CD4-positive, alpha-beta T cell (primary cell): ENCODE measurements at regions of chr19 and their contacts with region 1.

Region 1: DNA sequence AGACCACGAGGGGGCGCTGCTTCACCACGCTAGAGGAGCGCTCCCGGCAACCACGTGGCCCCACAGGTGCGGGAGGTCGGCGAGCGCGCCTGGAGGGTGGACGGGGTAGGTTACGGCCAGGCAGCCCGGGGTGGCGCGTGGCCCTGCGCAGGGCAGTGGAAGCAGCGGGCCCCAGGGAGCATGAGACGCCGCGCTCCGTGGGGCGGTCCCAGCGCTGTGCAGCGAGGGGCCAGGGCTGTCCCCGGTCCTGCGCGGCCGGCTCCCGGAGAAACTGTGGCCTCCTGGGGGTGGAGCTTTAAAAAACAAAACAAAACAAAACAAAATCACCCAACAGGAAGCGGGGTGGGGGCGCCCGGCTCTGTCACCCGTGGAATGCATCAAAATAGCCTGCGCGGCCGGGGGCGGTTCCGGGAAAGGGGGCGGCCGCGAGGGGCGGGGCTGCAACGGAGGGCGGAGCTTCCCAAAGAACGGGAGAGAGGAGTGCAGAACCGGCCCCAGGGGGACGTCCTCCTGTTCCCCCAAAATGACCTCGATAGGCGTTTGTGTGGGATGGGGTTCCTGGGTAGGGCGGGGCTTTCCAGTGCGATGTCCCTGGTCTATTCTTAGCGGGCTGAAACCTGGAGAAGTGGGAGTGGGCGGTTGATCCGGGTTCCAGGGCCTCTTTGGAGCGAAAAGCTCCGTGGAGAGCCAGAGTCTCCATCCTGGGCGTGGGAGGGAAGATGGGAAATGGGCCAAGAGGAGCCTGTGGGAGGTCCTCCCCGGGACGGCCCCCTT is 27.3 kb downstream of the NUMBL start:
- DNase-seq: peak; percentile 85 to 98 (median 94)
- ATAC-seq: peak; percentile 89
- H3K4me3 ChIP-seq: peak overlapping the region; percentile 56
- H3K4me3 Mint-ChIP-seq: peak overlapping the region; percentile 91
- H3K27ac ChIP-seq: peak overlapping the region; percentile 35 to 53
- H3K27ac Mint-ChIP-seq: peak overlapping the region; percentile 74
- H3K4me1 ChIP-seq: peaks cover 15% of the 10 kb centered on the region
- H3K4me1 Mint-ChIP-seq: peaks cover 19% of the 10 kb centered on the region
- H3K27me3 ChIP-seq: no peaks in the 10 kb centered on the region
- H3K27me3 Mint-ChIP-seq: no peaks in the 10 kb centered on the region
- CTCF ChIP-seq: peak; percentile 90

Region 2: GRCh38 chr19:39125554-39126311 is 1537.4 kb before region 1 on chr19 and contains the start of gene PAK4:
- CTCF ChIA-PET with region 1: no interaction called
- POLR2A ChIA-PET with region 1: no interaction called
- intact Hi-C with region 1: no loop called
- DNase-seq: peak; percentile 89 to 98 (median 95)
- ATAC-seq: peak; percentile 91
- H3K4me3 ChIP-seq: peak within 1 kb of the TSS; percentile 58
- H3K4me3 Mint-ChIP-seq: peak within 1 kb of the TSS; percentile 93
- H3K27ac ChIP-seq: peak within 1 kb of the TSS; percentile 69 to 88
- H3K27ac Mint-ChIP-seq: peak within 1 kb of the TSS; percentile 92
- H3K4me1 ChIP-seq: peaks cover 30% of the 10 kb centered on the region
- H3K4me1 Mint-ChIP-seq: peaks cover 55% of the 10 kb centered on the region
- H3K27me3 ChIP-seq: no peaks in the 10 kb centered on the region
- H3K27me3 Mint-ChIP-seq: peaks cover 5% of the 10 kb centered on the region
- CTCF ChIP-seq: no peak
- total RNA-seq, gene PAK4: 2.7 to 6.3 TPM

Region 3: GRCh38 chr19:40633207-40633606 is 29.9 kb before region 1 on chr19:
- CTCF ChIA-PET with region 1: interaction called, 10 read pairs
- POLR2A ChIA-PET with region 1: no interaction called
- intact Hi-C with region 1: no loop called
- DNase-seq: no peak
- ATAC-seq: no peak
- H3K4me3 ChIP-seq: no peak overlapping the region
- H3K4me3 Mint-ChIP-seq: no peak overlapping the region
- H3K27ac ChIP-seq: no peak overlapping the region
- H3K27ac Mint-ChIP-seq: no peak overlapping the region
- H3K4me1 ChIP-seq: peaks cover 9% of the 10 kb centered on the region
- H3K4me1 Mint-ChIP-seq: peaks cover 15% of the 10 kb centered on the region
- H3K27me3 ChIP-seq: no peaks in the 10 kb centered on the region
- H3K27me3 Mint-ChIP-seq: no peaks in the 10 kb centered on the region
- CTCF ChIP-seq: no peak

Region 4: DNA sequence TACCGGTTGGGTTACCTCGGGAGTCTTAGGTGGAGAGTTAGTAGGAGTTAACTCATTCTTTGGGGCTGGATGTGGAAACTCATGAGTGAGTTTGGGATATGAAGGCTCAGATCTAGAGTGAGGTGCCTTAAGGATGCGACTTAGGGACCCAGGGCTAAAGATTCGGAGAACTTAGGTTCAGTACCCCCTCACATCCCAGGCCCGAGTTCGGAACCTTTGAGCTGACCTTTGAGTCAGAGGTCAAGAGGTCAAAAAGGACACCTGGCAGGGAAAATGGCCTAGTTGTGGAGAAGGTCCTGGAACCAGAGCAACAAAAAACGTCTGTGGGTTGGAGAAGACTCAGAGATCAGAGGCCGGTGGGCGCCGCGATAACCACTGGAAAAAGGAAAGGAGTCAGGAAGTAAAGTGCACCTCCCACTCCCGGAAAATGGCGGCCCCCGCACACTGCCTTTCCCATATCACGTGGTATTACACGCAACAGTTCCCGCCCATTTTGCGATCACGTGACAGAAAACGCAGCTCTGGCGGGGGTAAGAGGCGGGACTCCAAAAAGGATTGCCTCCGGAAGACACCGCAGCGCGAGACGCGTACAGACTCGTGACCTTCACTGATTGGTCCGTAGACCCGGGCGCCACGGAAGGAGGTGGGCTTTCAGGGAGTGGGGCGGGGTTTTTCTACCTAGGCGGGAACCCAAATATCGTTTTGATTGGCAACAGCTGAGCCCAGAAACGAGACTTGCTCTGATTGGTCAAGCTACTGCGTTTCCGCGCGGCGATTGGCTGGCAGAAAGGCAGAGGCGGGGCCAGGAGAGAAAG is 87.2 kb after region 1 on chr19 and contains the start of gene ACTMAP:
- CTCF ChIA-PET with region 1: no interaction called
- POLR2A ChIA-PET with region 1: interaction called, 22 read pairs
- intact Hi-C with region 1: no loop called
- DNase-seq: peak; percentile 98 to 100 (median 99)
- ATAC-seq: peak; percentile 88
- H3K4me3 ChIP-seq: peak within 1 kb of the TSS; percentile 93
- H3K4me3 Mint-ChIP-seq: peak within 1 kb of the TSS; percentile 99
- H3K27ac ChIP-seq: peak within 1 kb of the TSS; percentile 84 to 93
- H3K27ac Mint-ChIP-seq: peak within 1 kb of the TSS; percentile 99
- H3K4me1 ChIP-seq: peaks cover 56% of the 10 kb centered on the region
- H3K4me1 Mint-ChIP-seq: peaks cover 47% of the 10 kb centered on the region
- H3K27me3 ChIP-seq: no peaks in the 10 kb centered on the region
- H3K27me3 Mint-ChIP-seq: no peaks in the 10 kb centered on the region
- CTCF ChIP-seq: no peak
- total RNA-seq, gene ACTMAP: 3.9 to 5.7 TPM

Region 5: GRCh38 chr19:40806488-40807468 is 143.7 kb after region 1 on chr19:
- CTCF ChIA-PET with region 1: interaction called, 24 read pairs
- POLR2A ChIA-PET with region 1: interaction called, 11 read pairs
- intact Hi-C with region 1: loop called in 1 of 2 experiments (anchors 5 kb)
- DNase-seq: peak; percentile 66 to 95 (median 75)
- ATAC-seq: peak; percentile 47
- H3K4me3 ChIP-seq: peak overlapping the region; percentile 24
- H3K4me3 Mint-ChIP-seq: peak overlapping the region; percentile 96
- H3K27ac ChIP-seq: peak overlapping the region; percentile 86 to 88
- H3K27ac Mint-ChIP-seq: peak overlapping the region; percentile 90
- H3K4me1 ChIP-seq: peaks cover 100% of the 10 kb centered on the region
- H3K4me1 Mint-ChIP-seq: peaks cover 85% of the 10 kb centered on the region
- H3K27me3 ChIP-seq: no peaks in the 10 kb centered on the region
- H3K27me3 Mint-ChIP-seq: no peaks in the 10 kb centered on the region
- CTCF ChIP-seq: peak; percentile 79

Region 6: GRCh38 chr19:40908976-40909375 is 245.9 kb after region 1 on chr19:
- CTCF ChIA-PET with region 1: no interaction called
- POLR2A ChIA-PET with region 1: interaction called, 7 read pairs
- intact Hi-C with region 1: loop called (anchors 1 to 2 kb)
- DNase-seq: peak in 5 of 14 experiments; percentile 24 to 77 (median 50)
- ATAC-seq: peak; percentile 58
- H3K4me3 ChIP-seq: peak overlapping the region; percentile 57
- H3K4me3 Mint-ChIP-seq: peak overlapping the region; percentile 80
- H3K27ac ChIP-seq: no peak overlapping the region
- H3K27ac Mint-ChIP-seq: peak overlapping the region; percentile 3
- H3K4me1 ChIP-seq: peaks cover 12% of the 10 kb centered on the region
- H3K4me1 Mint-ChIP-seq: peaks cover 19% of the 10 kb centered on the region
- H3K27me3 ChIP-seq: peaks cover 4 to 8% of the 10 kb centered on the region in 2 experiments
- H3K27me3 Mint-ChIP-seq: peaks cover 33% of the 10 kb centered on the region
- CTCF ChIP-seq: peak; percentile 21

Region 7: DNA sequence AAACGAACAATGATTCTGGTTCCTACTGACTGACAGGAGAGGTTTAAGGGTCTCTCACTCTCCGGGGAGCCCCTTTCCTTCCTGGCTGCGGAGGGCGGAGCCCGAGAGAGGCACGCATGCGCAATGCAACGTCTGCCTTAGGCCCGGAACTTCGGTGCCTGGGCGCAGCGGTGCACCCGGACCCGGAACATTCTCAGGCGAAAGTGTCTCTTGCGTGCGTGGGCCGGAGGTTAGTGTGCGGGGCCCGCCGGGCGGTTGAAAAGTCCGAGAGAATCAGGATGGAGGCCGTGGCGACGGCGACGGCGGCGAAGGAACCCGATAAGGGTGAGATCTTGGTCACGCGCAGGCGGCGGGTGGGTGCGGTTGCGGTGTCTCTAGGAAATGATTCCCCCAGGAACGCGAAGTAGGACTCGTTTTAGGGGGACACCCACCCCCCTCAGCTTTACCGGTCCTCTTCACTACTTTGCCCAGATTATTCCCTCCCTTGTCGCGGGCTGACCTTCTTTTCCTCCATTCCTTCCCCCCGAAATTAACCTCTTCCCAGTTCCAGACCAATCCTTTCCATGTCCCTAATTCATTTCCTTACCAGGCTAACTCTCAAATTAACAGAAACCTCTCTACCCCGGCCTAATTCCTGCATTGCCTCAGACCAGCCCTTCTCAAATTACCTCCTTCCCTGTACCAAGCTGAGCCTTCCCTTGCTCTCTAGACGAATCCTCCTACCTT is 647.1 kb after region 1 on chr19 and contains the start of gene CCDC97:
- CTCF ChIA-PET with region 1: no interaction called
- POLR2A ChIA-PET with region 1: interaction called, 5 read pairs
- intact Hi-C with region 1: loop called (anchors 1 to 5 kb)
- DNase-seq: peak; percentile 80 to 94 (median 88)
- ATAC-seq: peak; percentile 55
- H3K4me3 ChIP-seq: peak within 1 kb of the TSS; percentile 64
- H3K4me3 Mint-ChIP-seq: peak within 1 kb of the TSS; percentile 95
- H3K27ac ChIP-seq: peak within 1 kb of the TSS; percentile 95 to 97
- H3K27ac Mint-ChIP-seq: peak within 1 kb of the TSS; percentile 97
- H3K4me1 ChIP-seq: peaks cover 80% of the 10 kb centered on the region
- H3K4me1 Mint-ChIP-seq: peaks cover 80% of the 10 kb centered on the region
- H3K27me3 ChIP-seq: no peaks in the 10 kb centered on the region
- H3K27me3 Mint-ChIP-seq: no peaks in the 10 kb centered on the region
- CTCF ChIP-seq: no peak
- total RNA-seq, gene CCDC97: 27.3 to 29.7 TPM